ENCODE measurements at regions of chr6 and their contacts with region 1.

Region 1: GRCh38 chr6:75830959-75831885 is 82.2 kb downstream of the MYO6 start:
- DNase-seq: no peak
- ATAC-seq: no peak
- H3K4me3 ChIP-seq: no peak overlapping the region
- H3K27ac ChIP-seq: no peak overlapping the region
- H3K4me1 ChIP-seq: no peaks in the 10 kb centered on the region
- H3K27me3 ChIP-seq: no peaks in the 10 kb centered on the region
- CTCF ChIP-seq: no peak

Region 2: DNA sequence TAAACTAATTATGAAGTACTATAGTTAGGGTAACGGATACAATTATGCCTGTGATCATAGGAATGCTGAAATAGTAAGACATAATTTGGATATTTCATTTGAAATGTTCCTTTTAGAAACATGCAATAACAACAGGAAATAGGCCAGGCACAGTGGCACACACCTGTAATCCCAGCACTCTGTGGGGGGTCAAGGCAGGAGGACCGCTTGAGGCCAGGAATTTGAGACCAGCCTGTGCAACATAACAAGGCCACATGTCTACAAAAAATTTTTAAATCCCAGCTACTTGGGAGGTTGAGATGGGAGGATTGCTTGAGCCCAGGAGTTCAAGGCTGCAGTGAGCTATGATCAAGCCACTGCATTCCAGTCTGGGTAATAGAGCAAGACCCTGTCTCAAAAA is 107.8 kb before region 1 on chr6:
- CTCF ChIA-PET with region 1: no interaction called
- POLR2A ChIA-PET with region 1: interaction called, 12 read pairs
- intact Hi-C with region 1: no loop called
- DNase-seq: no peak
- ATAC-seq: no peak
- H3K4me3 ChIP-seq: no peak overlapping the region
- H3K27ac ChIP-seq: no peak overlapping the region
- H3K4me1 ChIP-seq: no peaks in the 10 kb centered on the region
- H3K27me3 ChIP-seq: no peaks in the 10 kb centered on the region
- CTCF ChIP-seq: no peak

Measured in PC-3 (cell line).